Dorsolateral prefrontal cortex (tissue), 120 donors: ENCODE measurements at regions of chr12 and their contacts with region 1.

Region 1: DNA sequence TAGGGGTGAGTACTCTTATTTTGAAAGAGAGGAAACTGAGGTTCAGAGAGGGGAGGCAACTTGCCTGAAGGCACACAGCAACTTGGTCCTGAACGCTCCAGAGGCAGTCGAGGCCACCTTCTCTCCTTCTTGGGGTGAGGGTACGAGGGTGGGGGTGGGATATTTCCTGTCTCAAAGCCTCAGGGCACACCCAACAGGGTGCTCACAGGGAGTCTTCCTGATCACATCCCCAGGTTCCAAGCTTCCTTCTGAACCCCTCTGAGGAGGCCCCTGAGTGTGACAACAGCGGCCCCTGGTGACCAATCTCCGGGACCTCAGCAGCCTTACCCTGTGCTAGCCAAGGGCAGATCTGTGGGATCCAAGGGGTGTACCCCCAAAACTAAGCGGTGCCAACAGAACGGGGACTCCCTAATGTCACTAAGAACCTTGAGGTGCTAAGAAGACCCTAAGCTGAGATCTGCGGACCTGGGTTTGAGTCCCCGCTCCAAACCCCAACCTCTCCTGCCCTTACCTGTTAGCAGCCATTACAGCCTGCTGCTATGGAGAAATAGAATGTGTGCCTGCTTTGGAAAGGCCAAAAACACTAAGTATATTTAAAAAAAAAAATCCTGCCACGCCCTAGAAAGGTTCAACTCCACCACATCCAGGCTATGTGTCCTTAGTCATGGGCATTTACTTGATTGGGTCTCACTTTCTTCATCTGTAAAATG is 57.9 kb downstream of the TRPV4 start:
- DNase-seq: peak; percentile 68 to 89 (median 78)
- H3K4me3 ChIP-seq: no peak overlapping the region
- H3K27ac ChIP-seq: peak overlapping the region in 11 of 59 donors; percentile 12 to 86 (median 69)
- H3K27me3 ChIP-seq: no peaks in the 10 kb centered on the region
- CTCF ChIP-seq: peak; percentile 49 to 96 (median 88)

Region 2: DNA sequence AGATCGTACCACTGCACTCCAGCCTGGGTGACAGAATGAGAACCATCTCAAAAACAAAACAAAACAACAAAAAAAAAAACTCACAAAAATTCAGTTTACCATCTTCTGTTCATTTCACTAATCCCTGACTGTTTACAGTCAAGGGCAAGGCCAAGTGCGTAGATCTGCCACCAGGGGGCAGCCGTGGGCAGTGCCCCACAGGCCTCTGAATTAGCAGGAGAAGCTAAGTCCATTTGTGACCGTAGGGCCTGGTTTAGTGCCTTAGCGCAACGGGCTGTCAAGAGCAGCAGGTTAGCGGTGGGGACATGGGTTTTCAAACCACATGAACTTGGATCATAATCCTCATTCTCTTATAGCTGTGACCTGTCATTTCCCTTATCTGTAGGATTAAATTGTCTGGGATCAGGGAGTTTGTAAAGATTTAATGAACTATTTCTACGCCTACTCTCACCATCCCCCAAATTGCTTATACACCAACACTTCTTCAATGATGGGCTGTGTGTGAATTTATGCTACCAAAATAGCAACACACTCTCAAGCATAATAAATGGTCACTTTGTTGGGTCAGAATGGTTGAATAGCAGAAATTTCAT is 347.2 kb before region 1 on chr12:
- intact Hi-C with region 1: loop called in 1 of 2 experiments (anchors 10 kb)
- DNase-seq: peak; percentile 62 to 83 (median 76)
- H3K4me3 ChIP-seq: no peak overlapping the region
- H3K27ac ChIP-seq: no peak overlapping the region
- H3K27me3 ChIP-seq: no peaks in the 10 kb centered on the region
- CTCF ChIP-seq: peak; percentile 82 to 99 (median 95)

Region 3: DNA sequence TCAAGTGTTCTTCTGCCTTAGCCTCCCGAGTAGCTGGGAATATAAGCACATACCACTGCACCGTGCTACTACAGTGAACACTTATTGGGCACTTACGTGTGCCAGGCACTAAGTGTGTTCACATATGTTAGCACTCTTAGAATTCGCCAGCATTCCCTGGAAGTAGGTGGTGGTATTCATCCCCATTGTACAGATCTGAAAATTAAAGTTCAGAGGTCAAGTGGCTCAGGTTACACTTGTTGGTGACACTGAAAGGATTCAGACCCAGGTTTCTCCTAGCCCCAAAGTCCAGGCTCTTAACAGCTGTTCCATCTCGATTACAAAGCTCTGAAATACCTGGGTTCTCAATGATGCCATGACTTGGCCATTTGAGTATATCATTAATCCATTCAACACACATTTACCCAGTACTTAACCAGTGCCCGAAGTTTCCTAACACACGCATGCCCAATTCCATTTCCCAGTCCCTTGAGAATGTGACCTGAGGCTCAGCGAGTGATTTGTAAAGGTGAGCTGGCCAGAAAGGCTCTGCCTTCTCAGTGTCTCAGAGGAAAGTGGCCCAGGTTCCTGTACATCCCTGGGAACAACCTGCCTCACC is 196.9 kb before region 1 on chr12:
- intact Hi-C with region 1: loop called in 1 of 2 experiments (anchors 5 kb)
- DNase-seq: no peak
- H3K4me3 ChIP-seq: no peak overlapping the region
- H3K27ac ChIP-seq: no peak overlapping the region
- H3K27me3 ChIP-seq: no peaks in the 10 kb centered on the region
- CTCF ChIP-seq: no peak

Region 4: GRCh38 chr12:109680264-109681005 is 94.9 kb before region 1 on chr12:
- intact Hi-C with region 1: no loop called
- DNase-seq: peak in 2 of 10 donors; percentile 7 to 22
- H3K4me3 ChIP-seq: no peak overlapping the region
- H3K27ac ChIP-seq: no peak overlapping the region
- H3K27me3 ChIP-seq: no peaks in the 10 kb centered on the region
- CTCF ChIP-seq: no peak

Region 5: GRCh38 chr12:109713187-109713984 is 61.9 kb before region 1 on chr12 and contains the start of gene FAM222A:
- intact Hi-C with region 1: loop called (anchors 1 to 2 kb)
- DNase-seq: peak; percentile 96 to 100 (median 98)
- H3K4me3 ChIP-seq: peak within 1 kb of the TSS; percentile 54 to 89 (median 78)
- H3K27ac ChIP-seq: peak within 1 kb of the TSS in 57 of 59 donors; percentile 41 to 97 (median 86)
- H3K27me3 ChIP-seq: peaks cover 0 to 12% (median 0%) of the 10 kb centered on the region in 45 donors
- CTCF ChIP-seq: peak in 53 of 56 donors; percentile 33 to 75 (median 57)
- total RNA-seq, gene FAM222A: 10.4 to 85.9 (median 23.1) TPM

Region 6: GRCh38 chr12:109727039-109727723 is 48.1 kb before region 1 on chr12:
- intact Hi-C with region 1: loop called in 1 of 2 experiments (anchors 2 kb)
- DNase-seq: peak; percentile 44 to 94 (median 92)
- H3K4me3 ChIP-seq: peak overlapping the region in 22 of 59 donors; percentile 1 to 51 (median 20)
- H3K27ac ChIP-seq: peak overlapping the region; percentile 64 to 97 (median 92)
- H3K27me3 ChIP-seq: no peaks in the 10 kb centered on the region
- CTCF ChIP-seq: peak in 15 of 56 donors; percentile 9 to 38 (median 25)

Region 7: GRCh38 chr12:109833307-109834189 is 58.2 kb after region 1 on chr12 and contains the start of gene TRPV4:
- intact Hi-C with region 1: no loop called
- DNase-seq: no peak
- H3K4me3 ChIP-seq: peak within 1 kb of the TSS in 42 of 59 donors; percentile 11 to 60 (median 36)
- H3K27ac ChIP-seq: no peak within 1 kb of the TSS
- H3K27me3 ChIP-seq: peaks cover 0 to 32% (median 19%) of the 10 kb centered on the region in 45 donors
- CTCF ChIP-seq: no peak
- total RNA-seq, gene TRPV4: 0.12 to 2.1 (median 0.49) TPM in 85 of 120 experiments, not detected in the others

Region 8: GRCh38 chr12:109880016-109880931 is 104.9 kb after region 1 on chr12 and contains the start of gene GLTP:
- intact Hi-C with region 1: no loop called
- DNase-seq: peak; percentile 48 to 91 (median 73)
- H3K4me3 ChIP-seq: peak within 1 kb of the TSS; percentile 66 to 98 (median 87)
- H3K27ac ChIP-seq: peak within 1 kb of the TSS in 58 of 59 donors; percentile 32 to 99 (median 92)
- H3K27me3 ChIP-seq: no peaks in the 10 kb centered on the region
- CTCF ChIP-seq: peak in 52 of 56 donors; percentile 9 to 93 (median 68)
- total RNA-seq, gene GLTP: 20.7 to 126 (median 43.1) TPM